Activated CD4-positive, alpha-beta memory T cell treated with anti-CD3 and anti-CD28 coated beads for 36 hours (primary cell): ENCODE measurements at regions of chr12 and their contacts with region 1.

Region 1: GRCh38 chr12:95918194-95918993 is 24.0 kb downstream of the CCDC38 start:
- DNase-seq: peak; percentile 58
- H3K4me3 Mint-ChIP-seq: no peak overlapping the region
- H3K27ac Mint-ChIP-seq: no peak overlapping the region
- H3K4me1 Mint-ChIP-seq: no peaks in the 10 kb centered on the region
- H3K27me3 Mint-ChIP-seq: peaks cover 2% of the 10 kb centered on the region

Region 2: GRCh38 chr12:95959107-95959506 is 40.7 kb after region 1 on chr12:
- CTCF ChIA-PET with region 1: interaction called, 11 read pairs
- POLR2A ChIA-PET with region 1: no interaction called
- intact Hi-C with region 1: no loop called
- DNase-seq: no peak
- H3K4me3 Mint-ChIP-seq: no peak overlapping the region
- H3K27ac Mint-ChIP-seq: no peak overlapping the region
- H3K4me1 Mint-ChIP-seq: no peaks in the 10 kb centered on the region
- H3K27me3 Mint-ChIP-seq: no peaks in the 10 kb centered on the region

Region 3: DNA sequence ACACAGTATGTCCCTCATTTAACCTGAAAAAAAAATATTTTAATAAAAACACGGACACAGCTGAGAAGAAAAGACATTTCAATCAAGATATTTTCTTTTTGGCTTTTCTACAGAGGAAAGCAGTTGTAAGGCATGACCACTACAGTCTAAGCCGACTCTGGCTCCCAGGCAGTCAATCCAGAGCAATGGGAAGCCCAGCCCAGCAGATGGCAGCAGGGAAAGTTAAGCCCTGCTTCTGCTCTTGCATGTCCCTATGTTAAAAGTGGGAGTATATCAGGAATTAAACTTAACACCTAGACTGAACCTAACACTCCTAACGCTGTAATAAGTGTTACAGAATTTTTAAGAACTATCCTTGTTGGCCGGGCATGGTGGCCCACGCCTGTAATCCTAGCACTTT is 97.3 kb after region 1 on chr12:
- CTCF ChIA-PET with region 1: no interaction called
- POLR2A ChIA-PET with region 1: no interaction called
- intact Hi-C with region 1: no loop called
- DNase-seq: no peak
- H3K4me3 Mint-ChIP-seq: no peak overlapping the region
- H3K27ac Mint-ChIP-seq: no peak overlapping the region
- H3K4me1 Mint-ChIP-seq: no peaks in the 10 kb centered on the region
- H3K27me3 Mint-ChIP-seq: no peaks in the 10 kb centered on the region